A673 (cell line): ENCODE measurements at regions of chr10 and their contacts with region 1.

Region 1: GRCh38 chr10:125200396-125200795 is 40.0 kb upstream of the CTBP2 start:
- DNase-seq: no peak
- H3K4me3 ChIP-seq: no peak overlapping the region
- H3K27ac ChIP-seq: no peak overlapping the region
- H3K4me1 ChIP-seq: no peaks in the 10 kb centered on the region
- H3K27me3 ChIP-seq: peaks cover 5% of the 10 kb centered on the region
- CTCF ChIP-seq: no peak

Region 2: GRCh38 chr10:123367195-123367594 is 1833.2 kb before region 1 on chr10:
- CTCF ChIA-PET with region 1: no interaction called
- POLR2A ChIA-PET with region 1: no interaction called
- intact Hi-C with region 1: no loop called
- DNase-seq: no peak
- H3K4me3 ChIP-seq: no peak overlapping the region
- H3K27ac ChIP-seq: no peak overlapping the region
- H3K4me1 ChIP-seq: no peaks in the 10 kb centered on the region
- H3K27me3 ChIP-seq: no peaks in the 10 kb centered on the region
- CTCF ChIP-seq: no peak

Region 3: GRCh38 chr10:124622866-124623536 is 577.4 kb before region 1 on chr10:
- CTCF ChIA-PET with region 1: no interaction called
- POLR2A ChIA-PET with region 1: interaction called, 19 read pairs
- intact Hi-C with region 1: no loop called
- DNase-seq: no peak
- H3K4me3 ChIP-seq: no peak overlapping the region
- H3K27ac ChIP-seq: no peak overlapping the region
- H3K4me1 ChIP-seq: no peaks in the 10 kb centered on the region
- H3K27me3 ChIP-seq: no peaks in the 10 kb centered on the region
- CTCF ChIP-seq: no peak

Region 4: DNA sequence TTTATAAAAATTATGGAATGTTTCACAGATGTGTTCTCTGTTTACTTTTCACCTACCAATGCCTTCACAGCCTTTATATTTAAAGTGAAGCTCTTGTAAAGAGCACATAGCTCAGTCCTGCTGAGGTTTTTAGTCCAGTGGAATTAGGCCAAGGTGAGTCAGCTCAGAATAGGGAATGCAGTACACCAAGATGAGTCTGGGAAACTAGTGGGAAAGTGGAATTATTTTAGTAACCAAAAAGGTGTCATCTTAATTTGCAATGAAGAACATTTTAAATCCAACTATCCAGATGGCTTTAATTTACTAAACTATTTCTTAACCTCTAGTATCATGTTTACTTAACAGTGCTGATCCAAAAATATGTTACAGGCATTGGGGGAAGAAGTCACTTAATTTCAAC is 196.3 kb after region 1 on chr10:
- CTCF ChIA-PET with region 1: no interaction called
- POLR2A ChIA-PET with region 1: no interaction called
- intact Hi-C with region 1: no loop called
- DNase-seq: no peak
- H3K4me3 ChIP-seq: no peak overlapping the region
- H3K27ac ChIP-seq: no peak overlapping the region
- H3K4me1 ChIP-seq: peaks cover 10% of the 10 kb centered on the region
- H3K27me3 ChIP-seq: peaks cover 4% of the 10 kb centered on the region
- CTCF ChIP-seq: no peak